ENCODE measurements at regions of chr1 and their contacts with region 1.

Region 1: DNA sequence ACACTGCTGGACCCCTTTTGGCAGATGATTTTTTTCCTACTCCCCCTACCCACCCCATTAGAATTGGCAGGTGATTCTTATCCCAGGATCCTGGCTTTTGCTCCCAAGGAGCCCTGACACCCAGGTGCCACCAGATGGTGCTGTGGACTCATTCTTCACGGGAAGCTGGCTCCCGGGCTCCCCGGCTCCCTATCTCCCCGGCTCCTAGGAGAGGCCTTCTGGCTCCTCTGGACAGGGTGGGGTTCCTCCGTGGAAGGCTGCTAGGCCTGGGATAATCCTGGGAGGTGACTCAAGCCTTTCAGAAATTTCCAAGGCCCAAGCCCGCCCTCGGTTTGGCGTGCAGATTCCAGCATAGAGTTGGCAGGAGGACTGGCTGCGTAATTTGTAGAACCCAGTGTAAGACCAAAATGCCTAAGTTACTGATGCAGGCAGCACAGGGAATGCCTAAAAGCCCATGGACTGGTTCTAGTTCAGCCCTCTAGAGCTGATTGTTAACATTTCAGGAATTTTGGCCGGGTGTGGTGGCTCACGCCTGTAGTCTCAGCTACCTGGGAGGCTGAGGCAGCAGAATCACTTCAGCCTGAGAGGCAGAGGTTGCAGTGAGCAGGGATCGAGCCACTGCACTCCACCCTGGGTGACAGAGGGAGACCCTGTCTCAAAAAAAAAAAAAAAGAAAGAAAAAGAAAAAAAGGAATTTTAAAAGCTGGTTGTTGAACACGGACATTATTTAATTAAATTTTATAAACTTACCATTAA is 6.8 kb upstream of the BSDC1 start:
- DNase-seq: peak; percentile 74
- H3K4me3 Mint-ChIP-seq: no peak overlapping the region
- H3K27ac Mint-ChIP-seq: no peak overlapping the region
- H3K4me1 Mint-ChIP-seq: no peaks in the 10 kb centered on the region
- H3K27me3 Mint-ChIP-seq: no peaks in the 10 kb centered on the region

Region 2: GRCh38 chr1:32413507-32414185 is 12.6 kb after region 1 on chr1:
- CTCF ChIA-PET with region 1: interaction called, 54 read pairs
- intact Hi-C with region 1: loop called (anchors 1 kb)
- DNase-seq: peak; percentile 84
- H3K4me3 Mint-ChIP-seq: no peak overlapping the region
- H3K27ac Mint-ChIP-seq: no peak overlapping the region
- H3K4me1 Mint-ChIP-seq: peaks cover 3% of the 10 kb centered on the region
- H3K27me3 Mint-ChIP-seq: peaks cover 7% of the 10 kb centered on the region

Region 3: GRCh38 chr1:32426489-32427255 is 25.6 kb after region 1 on chr1:
- CTCF ChIA-PET with region 1: interaction called, 25 read pairs
- intact Hi-C with region 1: no loop called
- DNase-seq: no peak
- H3K4me3 Mint-ChIP-seq: no peak overlapping the region
- H3K27ac Mint-ChIP-seq: no peak overlapping the region
- H3K4me1 Mint-ChIP-seq: peaks cover 3% of the 10 kb centered on the region
- H3K27me3 Mint-ChIP-seq: peaks cover 28% of the 10 kb centered on the region

Region 4: DNA sequence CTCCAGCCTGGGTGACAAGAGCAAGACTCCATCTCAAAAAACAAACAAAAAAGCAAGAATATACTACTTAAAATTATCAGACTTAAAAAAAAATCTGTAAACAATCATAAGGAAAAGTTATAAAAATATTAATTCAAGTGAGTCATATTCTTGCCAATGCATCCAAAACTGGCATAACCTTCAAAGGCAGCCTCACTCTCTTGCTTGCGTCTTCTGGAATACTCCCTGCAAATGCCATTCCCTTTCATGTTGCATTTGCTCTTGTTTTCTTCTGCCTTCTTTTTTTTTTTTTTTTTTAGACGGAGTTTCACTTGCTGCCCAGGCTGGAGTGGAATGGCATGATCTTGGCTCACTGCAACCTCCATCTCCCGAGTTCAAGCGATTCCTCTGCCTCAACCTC is 106.0 kb after region 1 on chr1:
- CTCF ChIA-PET with region 1: no interaction called
- intact Hi-C with region 1: no loop called
- DNase-seq: no peak
- H3K4me3 Mint-ChIP-seq: no peak overlapping the region
- H3K27ac Mint-ChIP-seq: no peak overlapping the region
- H3K4me1 Mint-ChIP-seq: no peaks in the 10 kb centered on the region
- H3K27me3 Mint-ChIP-seq: peaks cover 8% of the 10 kb centered on the region